ENCODE measurements at regions of chr12 and their contacts with region 1.

Region 1: DNA sequence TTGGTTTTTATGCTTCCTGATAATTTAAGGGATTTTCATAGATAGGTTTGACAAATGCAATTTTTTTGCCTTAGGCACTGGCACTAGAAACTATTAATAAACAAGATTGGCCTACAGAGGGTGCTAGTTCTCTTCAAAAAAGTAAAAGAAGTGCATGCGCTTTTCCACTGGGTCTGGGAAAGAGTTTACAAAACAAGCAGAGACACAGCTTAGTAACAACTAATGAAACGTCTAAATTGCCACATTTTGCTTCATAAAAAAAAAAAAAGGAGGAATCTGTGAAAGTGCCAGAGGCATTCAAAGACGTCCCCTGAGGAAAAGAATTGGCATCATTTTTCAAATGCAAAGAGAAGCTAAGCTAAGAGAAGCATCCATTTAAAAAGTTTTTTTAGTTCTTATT is 58.3 kb upstream of the EEA1 start:
- DNase-seq: peak; percentile 90
- H3K4me3 ChIP-seq: no peak overlapping the region
- H3K27ac ChIP-seq: peak overlapping the region; percentile 35
- H3K4me1 ChIP-seq: peaks cover 7% of the 10 kb centered on the region
- H3K27me3 ChIP-seq: no peaks in the 10 kb centered on the region
- CTCF ChIP-seq: peak; percentile 69

Region 2: GRCh38 chr12:92784795-92785562 is 202.4 kb before region 1 on chr12:
- CTCF ChIA-PET with region 1: no interaction called
- POLR2A ChIA-PET with region 1: no interaction called
- intact Hi-C with region 1: loop called (anchors 5 kb)
- DNase-seq: peak; percentile 88
- H3K4me3 ChIP-seq: no peak overlapping the region
- H3K27ac ChIP-seq: no peak overlapping the region
- H3K4me1 ChIP-seq: no peaks in the 10 kb centered on the region
- H3K27me3 ChIP-seq: no peaks in the 10 kb centered on the region
- CTCF ChIP-seq: peak; percentile 67

Region 3: DNA sequence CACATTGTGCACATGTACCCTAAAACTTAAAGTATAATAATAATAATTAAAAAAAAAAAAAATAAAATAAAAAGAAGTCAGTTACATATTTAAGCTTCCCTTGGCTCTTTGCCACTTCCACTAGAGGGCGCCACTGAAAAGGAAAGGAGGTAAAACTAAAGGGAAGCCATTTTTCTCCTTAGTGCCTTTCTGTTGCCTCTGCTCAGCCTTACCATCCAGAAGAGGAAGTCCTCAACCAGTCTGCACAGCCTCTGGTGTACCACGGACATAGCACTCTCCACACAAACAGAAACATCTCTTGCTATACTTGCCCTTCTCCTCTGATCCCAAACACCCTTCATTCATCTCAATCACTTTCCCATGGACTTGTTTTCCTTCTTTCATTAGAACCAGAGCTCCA is 110.7 kb after region 1 on chr12:
- CTCF ChIA-PET with region 1: no interaction called
- POLR2A ChIA-PET with region 1: no interaction called
- intact Hi-C with region 1: loop called (anchors 5 kb)
- DNase-seq: peak; percentile 79
- H3K4me3 ChIP-seq: no peak overlapping the region
- H3K27ac ChIP-seq: no peak overlapping the region
- H3K4me1 ChIP-seq: peaks cover 23% of the 10 kb centered on the region
- H3K27me3 ChIP-seq: no peaks in the 10 kb centered on the region
- CTCF ChIP-seq: peak; percentile 65

Region 4: DNA sequence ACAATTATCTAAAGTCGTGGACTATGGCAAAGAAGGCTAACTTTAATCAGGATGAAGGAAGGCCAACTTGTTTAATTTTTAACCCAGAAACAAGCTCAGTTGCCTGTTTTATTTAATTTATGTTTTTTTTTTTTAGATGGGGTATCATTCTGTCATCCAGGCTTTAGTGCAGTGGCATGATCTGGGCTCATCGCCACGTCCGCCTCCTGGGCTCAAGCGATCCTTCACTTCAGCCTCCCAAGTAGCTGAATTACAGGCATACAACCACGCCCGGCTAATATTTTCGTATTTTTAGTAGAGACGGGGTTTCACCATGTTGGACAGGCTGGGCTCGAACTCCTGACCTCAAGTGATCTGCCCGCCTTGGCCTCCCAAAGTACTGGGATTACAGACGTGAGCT is 410.1 kb after region 1 on chr12:
- CTCF ChIA-PET with region 1: interaction called, 21 read pairs
- POLR2A ChIA-PET with region 1: interaction called, 3 read pairs
- intact Hi-C with region 1: loop called (anchors 1 kb)
- DNase-seq: no peak
- H3K4me3 ChIP-seq: no peak overlapping the region
- H3K27ac ChIP-seq: no peak overlapping the region
- H3K4me1 ChIP-seq: peaks cover 3% of the 10 kb centered on the region
- H3K27me3 ChIP-seq: no peaks in the 10 kb centered on the region
- CTCF ChIP-seq: no peak

Region 5: DNA sequence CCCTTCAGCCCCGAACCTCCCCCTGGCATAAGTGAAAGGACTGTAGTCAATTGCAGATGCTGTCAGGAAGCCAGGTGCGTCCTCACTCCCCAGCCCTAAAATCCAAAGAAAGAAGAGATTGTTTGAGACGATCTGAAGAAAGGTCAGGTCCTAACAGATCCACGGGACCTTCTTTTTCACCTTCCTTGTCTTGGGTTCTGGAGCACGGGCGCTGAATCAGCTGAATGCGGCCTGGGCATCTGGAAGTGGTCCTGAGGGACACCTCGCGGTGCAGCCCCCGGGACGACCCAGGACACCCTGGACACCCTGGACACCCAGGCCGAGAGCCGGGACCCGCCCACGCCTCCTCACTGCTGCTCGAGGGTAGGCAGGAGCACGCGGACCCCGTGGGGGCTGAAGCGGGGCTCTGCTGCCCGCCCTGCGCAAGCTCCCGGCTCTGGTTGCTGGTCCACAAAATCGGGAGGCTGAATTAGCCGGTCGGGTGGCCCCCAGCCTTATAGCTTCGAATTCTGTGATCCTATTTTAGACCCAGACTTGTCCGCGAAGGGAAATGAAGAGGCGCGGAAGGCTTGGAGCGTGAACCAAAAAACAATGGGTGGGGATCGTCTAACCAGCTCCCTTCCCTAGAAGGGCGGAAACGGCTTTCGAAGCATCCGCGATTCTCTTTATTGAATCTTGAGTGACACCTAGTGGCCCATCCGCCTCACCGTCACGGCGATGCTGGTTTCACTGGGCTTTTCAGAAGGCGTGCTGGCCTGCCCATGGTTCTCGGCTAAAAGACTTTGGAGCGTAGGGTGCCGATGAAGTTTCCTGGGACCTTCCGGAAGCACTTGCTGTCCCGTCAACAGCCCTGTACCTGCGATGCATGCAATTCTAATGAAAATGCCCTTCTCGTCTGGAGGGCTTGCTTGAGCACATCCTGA is 1114.6 kb after region 1 on chr12:
- CTCF ChIA-PET with region 1: no interaction called
- POLR2A ChIA-PET with region 1: no interaction called
- intact Hi-C with region 1: loop called (anchors 2 kb)
- DNase-seq: peak; percentile 93
- H3K4me3 ChIP-seq: peak overlapping the region; percentile 53
- H3K27ac ChIP-seq: no peak overlapping the region
- H3K4me1 ChIP-seq: no peaks in the 10 kb centered on the region
- H3K27me3 ChIP-seq: no peaks in the 10 kb centered on the region
- CTCF ChIP-seq: peak; percentile 91